Activated B cell treated with CpG ODN at 0.5 μM for 24 hours (primary cell): ENCODE measurements at regions of chr17 and their contacts with region 1.

Region 1: GRCh38 chr17:58658804-58659713 is 32.8 kb downstream of the TEX14 start:
- DNase-seq: peak; percentile 57
- ATAC-seq: peak; percentile 79
- H3K4me3 Mint-ChIP-seq: peak overlapping the region; percentile 84
- H3K27ac Mint-ChIP-seq: peak overlapping the region; percentile 100
- H3K4me1 Mint-ChIP-seq: peaks cover 13% of the 10 kb centered on the region
- H3K27me3 Mint-ChIP-seq: no peaks in the 10 kb centered on the region
- CTCF ChIP-seq: no peak

Region 2: GRCh38 chr17:58452521-58453137 is 206.4 kb before region 1 on chr17:
- CTCF ChIA-PET with region 1: no interaction called
- POLR2A ChIA-PET with region 1: interaction called, 12 read pairs
- intact Hi-C with region 1: no loop called
- DNase-seq: no peak
- ATAC-seq: no peak
- H3K4me3 Mint-ChIP-seq: no peak overlapping the region
- H3K27ac Mint-ChIP-seq: no peak overlapping the region
- H3K4me1 Mint-ChIP-seq: no peaks in the 10 kb centered on the region
- H3K27me3 Mint-ChIP-seq: no peaks in the 10 kb centered on the region
- CTCF ChIP-seq: no peak

Region 3: DNA sequence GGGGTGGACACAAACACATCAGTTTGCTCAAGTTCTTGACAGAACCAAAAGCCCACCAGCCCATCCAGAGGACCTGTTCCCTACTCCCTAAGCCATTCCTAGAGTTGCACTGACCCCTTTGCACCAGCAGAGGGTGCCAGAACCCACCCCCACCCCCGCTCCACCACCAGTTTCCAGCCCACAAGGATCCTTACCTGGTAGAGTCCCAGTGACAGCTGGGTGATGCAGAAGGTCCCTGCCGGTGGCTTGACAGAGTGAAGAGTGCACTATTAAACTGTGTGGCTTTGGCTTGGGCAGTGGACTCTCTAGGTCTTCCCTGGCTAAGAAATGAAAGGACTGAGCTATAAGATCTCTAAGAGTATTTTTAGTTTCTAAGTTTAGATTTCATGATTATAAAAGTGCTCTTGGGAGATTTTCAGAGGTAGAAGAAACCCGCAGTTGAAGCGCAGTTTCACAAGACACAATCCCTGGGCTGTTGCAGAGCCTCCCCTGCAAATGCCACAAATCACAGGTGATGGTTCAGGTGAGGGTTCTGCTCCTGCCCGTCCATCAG is 71.3 kb before region 1 on chr17:
- CTCF ChIA-PET with region 1: no interaction called
- POLR2A ChIA-PET with region 1: interaction called, 5 read pairs
- intact Hi-C with region 1: loop called (anchors 1 kb)
- DNase-seq: peak; percentile 21
- ATAC-seq: peak; percentile 86
- H3K4me3 Mint-ChIP-seq: no peak overlapping the region
- H3K27ac Mint-ChIP-seq: no peak overlapping the region
- H3K4me1 Mint-ChIP-seq: peaks cover 3% of the 10 kb centered on the region
- H3K27me3 Mint-ChIP-seq: no peaks in the 10 kb centered on the region
- CTCF ChIP-seq: no peak

Region 4: DNA sequence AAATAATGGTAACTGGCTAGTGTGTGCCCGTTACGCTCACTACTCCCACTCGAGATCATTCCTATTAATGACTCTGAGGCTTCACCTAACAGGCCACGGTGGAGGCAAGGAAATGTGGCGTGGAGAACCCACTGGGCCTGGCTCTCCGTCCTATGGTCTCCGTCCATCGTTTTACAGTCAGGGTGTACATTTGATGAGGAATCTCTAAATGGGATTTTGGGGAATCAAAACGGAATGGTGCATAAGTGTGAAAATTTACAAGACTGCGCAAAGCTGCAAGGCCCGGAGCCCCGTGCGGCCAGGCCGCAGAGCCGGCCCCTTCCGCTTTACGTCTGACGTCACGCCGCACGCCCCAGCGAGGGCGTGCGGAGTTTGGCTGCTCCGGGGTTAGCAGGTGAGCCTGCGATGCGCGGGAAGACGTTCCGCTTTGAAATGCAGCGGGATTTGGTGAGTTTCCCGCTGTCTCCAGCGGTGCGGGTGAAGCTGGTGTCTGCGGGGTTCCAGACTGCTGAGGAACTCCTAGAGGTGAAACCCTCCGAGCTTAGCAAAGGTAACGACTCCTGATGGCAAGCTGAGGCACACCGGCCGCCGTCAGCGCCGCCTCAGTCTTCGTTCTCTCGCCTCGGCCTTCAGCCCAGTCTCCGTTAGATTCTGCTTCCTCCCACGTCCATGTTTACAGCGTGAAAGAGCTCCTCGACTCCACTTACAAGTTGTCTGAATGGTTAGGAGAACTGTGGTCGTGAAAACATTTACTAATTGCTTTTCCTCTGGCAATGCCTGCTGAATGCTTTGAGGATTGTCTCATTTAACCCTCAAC is 33.4 kb after region 1 on chr17 and contains the start of gene RAD51C:
- CTCF ChIA-PET with region 1: no interaction called
- POLR2A ChIA-PET with region 1: interaction called, 41 read pairs
- intact Hi-C with region 1: loop called (anchors 1 kb)
- DNase-seq: peak; percentile 83
- ATAC-seq: peak; percentile 98
- H3K4me3 Mint-ChIP-seq: peak within 1 kb of the TSS; percentile 94
- H3K27ac Mint-ChIP-seq: peak within 1 kb of the TSS; percentile 89
- H3K4me1 Mint-ChIP-seq: peaks cover 22% of the 10 kb centered on the region
- H3K27me3 Mint-ChIP-seq: no peaks in the 10 kb centered on the region
- CTCF ChIP-seq: no peak
- total RNA-seq, gene RAD51C: 32.8 and 36.8 TPM in 2 replicates

Region 5: GRCh38 chr17:59106463-59107305 is 447.6 kb after region 1 on chr17 and contains the start of gene TRIM37:
- CTCF ChIA-PET with region 1: no interaction called
- POLR2A ChIA-PET with region 1: no interaction called
- intact Hi-C with region 1: loop called (anchors 2 kb)
- DNase-seq: peak; percentile 98
- ATAC-seq: peak; percentile 96
- H3K4me3 Mint-ChIP-seq: peak within 1 kb of the TSS; percentile 94
- H3K27ac Mint-ChIP-seq: peak within 1 kb of the TSS; percentile 82
- H3K4me1 Mint-ChIP-seq: peaks cover 28% of the 10 kb centered on the region
- H3K27me3 Mint-ChIP-seq: no peaks in the 10 kb centered on the region
- CTCF ChIP-seq: no peak
- total RNA-seq, gene TRIM37: 16.4 and 17.3 TPM in 2 replicates